CD8-positive, alpha-beta memory T cell (primary cell): ENCODE measurements at regions of chr11 and their contacts with region 1.

Region 1: GRCh38 chr11:78564490-78565467 is 9.9 kb downstream of the NARS2 start:
- DNase-seq: peak in 3 of 5 donors; percentile 12 to 53 (median 45)
- H3K4me3 ChIP-seq: no peak overlapping the region
- H3K4me3 Mint-ChIP-seq: no peak overlapping the region
- H3K27ac ChIP-seq: no peak overlapping the region
- H3K27ac Mint-ChIP-seq: peak overlapping the region in 6 of 8 donors; percentile 7 to 83 (median 50)
- H3K4me1 ChIP-seq: peaks cover 5% of the 10 kb centered on the region
- H3K4me1 Mint-ChIP-seq: peaks cover 19 to 31% (median 26%) of the 10 kb centered on the region in 3 donors
- H3K27me3 ChIP-seq: no peaks in the 10 kb centered on the region
- H3K27me3 Mint-ChIP-seq: no peaks in the 10 kb centered on the region

Region 2: DNA sequence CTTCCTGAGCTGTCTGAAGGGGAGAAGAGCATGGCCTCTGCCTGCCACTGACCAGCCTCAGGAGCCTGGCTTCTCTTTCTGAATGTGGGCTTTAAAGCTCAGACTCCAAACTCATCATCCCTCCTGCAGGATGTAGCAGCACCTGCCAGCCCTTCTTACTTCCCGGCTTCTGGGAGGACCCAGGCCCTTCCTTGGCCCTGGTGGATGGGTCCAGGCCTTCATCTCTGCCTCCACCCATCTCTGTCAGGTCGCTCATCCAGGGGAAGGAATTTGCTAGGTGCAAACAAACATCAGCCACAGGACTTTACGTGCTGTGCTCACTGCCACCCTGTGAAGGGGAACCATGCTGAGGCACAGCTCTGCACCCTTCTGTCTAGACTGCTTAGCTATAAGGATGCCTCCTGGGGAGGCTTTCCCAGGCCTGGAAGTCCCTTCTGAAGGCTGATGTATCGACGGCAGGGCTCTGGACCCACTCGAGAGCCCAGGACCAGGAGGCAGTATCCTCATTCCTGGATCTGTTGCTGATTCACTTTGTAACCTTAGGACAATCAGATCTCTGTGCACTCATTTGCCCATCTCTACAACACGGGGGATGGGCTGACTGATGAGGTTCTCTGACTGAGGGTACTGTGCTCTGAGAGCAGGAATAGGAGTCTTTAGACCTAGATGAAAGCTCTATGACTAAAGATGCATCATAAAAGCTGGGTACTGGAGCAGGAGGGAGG is 345.1 kb before region 1 on chr11:
- CTCF ChIA-PET with region 1: no interaction called
- POLR2A ChIA-PET with region 1: no interaction called
- DNase-seq: no peak
- H3K4me3 ChIP-seq: no peak overlapping the region
- H3K4me3 Mint-ChIP-seq: peak overlapping the region in 1 of 7 donors; percentile 4
- H3K27ac ChIP-seq: no peak overlapping the region
- H3K27ac Mint-ChIP-seq: peak overlapping the region in 1 of 8 donors; percentile 64
- H3K4me1 ChIP-seq: no peaks in the 10 kb centered on the region
- H3K4me1 Mint-ChIP-seq: no peaks in the 10 kb centered on the region
- H3K27me3 ChIP-seq: no peaks in the 10 kb centered on the region
- H3K27me3 Mint-ChIP-seq: no peaks in the 10 kb centered on the region

Region 3: DNA sequence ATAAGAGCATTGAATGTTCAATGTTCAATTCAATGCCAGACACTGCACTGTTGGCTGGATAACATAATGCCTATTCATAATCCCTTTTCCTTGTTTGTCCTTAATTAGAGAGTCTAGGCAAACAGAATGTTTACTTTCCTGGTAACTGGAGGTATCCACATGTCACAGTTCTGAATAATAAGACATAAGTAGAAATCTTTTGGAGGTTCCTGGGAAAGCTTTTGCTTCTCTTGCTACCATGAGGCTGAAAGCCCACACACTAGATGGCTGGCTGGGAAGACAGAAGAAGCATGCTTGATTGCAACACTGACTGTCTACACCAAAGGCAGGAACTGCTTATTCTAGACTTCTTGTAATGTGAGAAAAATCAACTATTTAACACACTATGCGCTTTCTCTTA is 226.6 kb before region 1 on chr11:
- CTCF ChIA-PET with region 1: no interaction called
- POLR2A ChIA-PET with region 1: no interaction called
- DNase-seq: no peak
- H3K4me3 ChIP-seq: no peak overlapping the region
- H3K4me3 Mint-ChIP-seq: no peak overlapping the region
- H3K27ac ChIP-seq: no peak overlapping the region
- H3K27ac Mint-ChIP-seq: no peak overlapping the region
- H3K4me1 ChIP-seq: no peaks in the 10 kb centered on the region
- H3K4me1 Mint-ChIP-seq: peaks cover 2 to 17% (median 17%) of the 10 kb centered on the region in 3 donors
- H3K27me3 ChIP-seq: no peaks in the 10 kb centered on the region
- H3K27me3 Mint-ChIP-seq: peaks cover 11 to 15% of the 10 kb centered on the region in 2 donors

Region 4: GRCh38 chr11:78416305-78417178 is 148.2 kb before region 1 on chr11:
- CTCF ChIA-PET with region 1: interaction called, 78 read pairs
- POLR2A ChIA-PET with region 1: interaction called, 6 read pairs
- DNase-seq: peak; percentile 56 to 86 (median 67)
- H3K4me3 ChIP-seq: peak overlapping the region; percentile 63
- H3K4me3 Mint-ChIP-seq: peak overlapping the region; percentile 83 to 96 (median 88)
- H3K27ac ChIP-seq: peak overlapping the region; percentile 62
- H3K27ac Mint-ChIP-seq: peak overlapping the region; percentile 22 to 89 (median 76)
- H3K4me1 ChIP-seq: peaks cover 6% of the 10 kb centered on the region
- H3K4me1 Mint-ChIP-seq: peaks cover 19 to 28% (median 28%) of the 10 kb centered on the region in 3 donors
- H3K27me3 ChIP-seq: peaks cover 9% of the 10 kb centered on the region
- H3K27me3 Mint-ChIP-seq: peaks cover 11 to 18% of the 10 kb centered on the region in 2 donors

Region 5: DNA sequence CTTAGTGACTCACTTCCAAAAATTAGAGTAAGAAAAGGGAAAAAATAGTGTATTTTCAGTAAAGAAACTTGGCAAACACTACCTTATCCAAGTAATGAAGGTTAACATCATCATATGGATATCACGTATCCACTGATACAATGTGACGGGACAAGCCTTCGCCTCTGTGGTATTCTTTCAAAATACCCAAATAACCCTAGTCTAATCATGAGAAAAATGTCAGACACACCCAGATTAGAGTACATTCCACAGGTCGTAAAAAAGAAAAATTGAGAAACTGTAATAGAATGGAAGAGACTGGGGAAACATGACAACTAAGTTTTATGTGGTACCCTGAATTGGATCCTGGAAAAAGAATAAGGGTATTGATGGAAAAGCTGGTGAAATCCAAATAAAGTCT is 39.1 kb before region 1 on chr11:
- CTCF ChIA-PET with region 1: no interaction called
- POLR2A ChIA-PET with region 1: no interaction called
- DNase-seq: no peak
- H3K4me3 ChIP-seq: no peak overlapping the region
- H3K4me3 Mint-ChIP-seq: no peak overlapping the region
- H3K27ac ChIP-seq: no peak overlapping the region
- H3K27ac Mint-ChIP-seq: no peak overlapping the region
- H3K4me1 ChIP-seq: no peaks in the 10 kb centered on the region
- H3K4me1 Mint-ChIP-seq: no peaks in the 10 kb centered on the region
- H3K27me3 ChIP-seq: no peaks in the 10 kb centered on the region
- H3K27me3 Mint-ChIP-seq: no peaks in the 10 kb centered on the region

Region 6: DNA sequence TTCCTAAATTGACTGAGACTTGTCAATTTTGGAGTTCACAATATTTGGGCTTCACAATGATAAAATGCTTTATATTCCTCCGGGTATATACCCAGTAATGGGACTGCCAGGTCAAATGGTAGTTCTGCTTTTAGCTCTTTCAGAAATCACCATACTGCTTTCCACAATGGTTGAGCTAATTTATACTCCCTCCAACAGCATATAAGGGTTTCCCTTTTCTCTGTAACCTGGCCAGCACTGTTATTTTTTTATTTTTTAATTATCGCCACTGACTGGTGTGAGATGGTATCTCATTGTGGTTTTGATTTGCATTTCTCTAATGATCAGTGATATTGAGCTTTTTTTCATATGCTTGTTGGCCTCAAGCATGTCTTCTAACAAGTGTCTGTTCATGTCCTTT is 11.9 kb before region 1 on chr11:
- CTCF ChIA-PET with region 1: interaction called, 11 read pairs
- POLR2A ChIA-PET with region 1: no interaction called
- DNase-seq: no peak
- H3K4me3 ChIP-seq: no peak overlapping the region
- H3K4me3 Mint-ChIP-seq: no peak overlapping the region
- H3K27ac ChIP-seq: no peak overlapping the region
- H3K27ac Mint-ChIP-seq: no peak overlapping the region
- H3K4me1 ChIP-seq: no peaks in the 10 kb centered on the region
- H3K4me1 Mint-ChIP-seq: peaks cover 7 to 18% (median 16%) of the 10 kb centered on the region in 3 donors
- H3K27me3 ChIP-seq: no peaks in the 10 kb centered on the region
- H3K27me3 Mint-ChIP-seq: no peaks in the 10 kb centered on the region

Region 7: DNA sequence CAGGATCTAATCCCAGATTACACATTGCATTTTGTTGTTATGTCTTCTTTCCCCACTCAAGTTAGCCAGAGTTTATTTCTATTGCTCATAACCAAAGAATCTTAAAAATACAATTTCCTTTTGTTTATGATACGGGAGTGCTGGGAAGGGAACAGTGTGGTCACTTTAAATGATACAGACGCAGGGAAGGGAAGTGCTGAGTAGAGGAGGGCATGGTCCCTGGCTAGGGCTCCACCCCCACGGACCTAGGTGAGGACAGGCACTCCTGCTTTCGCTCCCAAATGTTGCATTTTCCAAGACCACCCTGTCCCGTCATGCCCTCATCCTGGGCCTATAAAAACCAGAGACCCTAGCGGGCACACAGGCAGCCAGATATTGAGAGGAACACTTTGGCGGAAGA is 40.5 kb after region 1 on chr11:
- CTCF ChIA-PET with region 1: no interaction called
- POLR2A ChIA-PET with region 1: no interaction called
- DNase-seq: no peak
- H3K4me3 ChIP-seq: no peak overlapping the region
- H3K4me3 Mint-ChIP-seq: no peak overlapping the region
- H3K27ac ChIP-seq: no peak overlapping the region
- H3K27ac Mint-ChIP-seq: no peak overlapping the region
- H3K4me1 ChIP-seq: no peaks in the 10 kb centered on the region
- H3K4me1 Mint-ChIP-seq: no peaks in the 10 kb centered on the region
- H3K27me3 ChIP-seq: peaks cover 3% of the 10 kb centered on the region
- H3K27me3 Mint-ChIP-seq: peaks cover 9 to 44% of the 10 kb centered on the region in 2 donors